Uterus (tissue), 4 donors: ENCODE measurements at regions of chr1 and their contacts with region 1.

Region 1: DNA sequence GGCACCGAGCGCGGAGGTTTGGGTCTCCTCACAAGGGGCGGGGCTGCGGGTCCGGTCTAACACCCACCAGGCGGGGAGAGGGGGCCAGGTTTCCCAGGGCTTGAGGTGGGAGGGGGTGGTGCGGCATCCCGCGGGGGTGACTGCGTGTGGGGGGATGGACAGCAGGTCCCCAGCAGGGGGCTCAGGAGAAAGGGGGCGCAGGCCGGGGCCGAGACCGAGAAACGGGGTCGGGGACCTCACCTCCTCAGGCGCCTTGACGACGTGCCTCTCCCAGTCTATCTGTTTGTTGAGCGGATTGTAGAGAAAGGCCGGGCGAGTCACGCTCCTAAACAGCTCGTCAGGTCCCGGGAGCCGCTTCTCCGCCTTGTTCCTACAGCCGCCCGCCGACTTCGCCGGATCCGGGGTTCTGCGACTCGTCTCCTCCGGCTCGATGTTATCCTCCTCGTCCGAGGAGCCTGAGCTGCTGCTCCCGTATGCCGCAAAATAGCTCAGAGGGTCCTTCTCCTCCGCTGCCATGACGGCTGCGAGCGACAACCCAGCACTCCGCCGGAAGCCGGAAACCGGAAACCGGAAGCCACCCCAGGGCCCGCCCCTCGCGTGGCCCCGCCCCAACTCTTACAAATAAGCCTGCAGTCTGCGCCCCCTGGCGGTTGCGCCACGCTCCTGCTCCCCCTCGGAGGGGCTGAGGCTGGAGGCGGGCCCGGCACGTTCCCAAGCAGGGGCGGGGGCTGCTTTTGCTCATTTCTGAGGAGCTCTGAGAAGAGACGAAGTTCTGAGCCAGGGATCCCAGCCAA is at the start of gene C1orf52:
- DNase-seq: peak; percentile 95 to 97
- H3K4me3 ChIP-seq: peak within 1 kb of the TSS; percentile 91 to 100
- H3K27ac ChIP-seq: peak within 1 kb of the TSS; percentile 68 to 83
- H3K4me1 ChIP-seq: no peaks in the 10 kb centered on the region
- H3K27me3 ChIP-seq: no peaks in the 10 kb centered on the region
- CTCF ChIP-seq: peak; percentile 96 to 99 (median 97)
- POLR2A ChIP-seq: peak; percentile 26 to 66
- total RNA-seq, gene C1orf52: 22.3 to 47.6 (median 28.8) TPM

Region 2: DNA sequence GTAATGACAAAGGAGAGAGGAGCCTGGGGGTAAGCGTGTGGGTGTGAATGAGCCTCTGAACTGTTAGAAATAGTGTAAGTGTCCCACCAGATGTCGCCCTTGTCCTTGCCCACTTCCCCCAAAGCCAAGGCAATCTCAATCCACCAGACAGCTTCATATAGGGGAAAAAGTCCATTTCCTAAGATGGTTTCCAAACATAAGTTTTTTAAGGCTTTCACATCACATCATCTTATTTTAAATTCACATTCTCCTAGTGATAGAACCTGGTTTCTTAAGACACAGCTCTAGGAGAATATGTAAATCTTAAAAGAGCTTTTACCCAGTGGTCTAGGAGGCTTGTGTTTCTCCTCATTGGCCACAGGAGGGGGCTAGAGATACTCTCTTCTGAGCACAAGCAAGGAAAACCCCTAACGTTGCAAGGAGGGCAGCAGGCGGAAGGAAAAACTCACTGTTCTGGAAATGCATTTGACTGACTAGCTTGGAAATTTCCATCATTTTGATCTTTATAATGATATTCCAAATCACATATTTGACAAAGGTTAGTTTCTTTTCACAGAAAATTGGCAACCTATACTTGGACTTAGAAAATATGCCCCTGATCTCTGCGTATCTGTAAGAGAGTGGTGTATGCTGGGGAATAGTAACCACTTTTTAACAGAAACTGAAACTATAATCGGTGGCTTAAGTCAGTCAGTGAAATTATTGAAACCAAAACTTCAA is 314.4 kb before region 1 on chr1:
- intact Hi-C with region 1: loop called (anchors 5 kb)
- DNase-seq: peak; percentile 54 to 70
- H3K4me3 ChIP-seq: peak overlapping the region; percentile 19 to 40
- H3K27ac ChIP-seq: peak overlapping the region; percentile 69 to 71
- H3K4me1 ChIP-seq: no peaks in the 10 kb centered on the region
- H3K27me3 ChIP-seq: no peaks in the 10 kb centered on the region
- CTCF ChIP-seq: peak; percentile 71 to 92 (median 80)
- POLR2A ChIP-seq: no peak

Region 3: DNA sequence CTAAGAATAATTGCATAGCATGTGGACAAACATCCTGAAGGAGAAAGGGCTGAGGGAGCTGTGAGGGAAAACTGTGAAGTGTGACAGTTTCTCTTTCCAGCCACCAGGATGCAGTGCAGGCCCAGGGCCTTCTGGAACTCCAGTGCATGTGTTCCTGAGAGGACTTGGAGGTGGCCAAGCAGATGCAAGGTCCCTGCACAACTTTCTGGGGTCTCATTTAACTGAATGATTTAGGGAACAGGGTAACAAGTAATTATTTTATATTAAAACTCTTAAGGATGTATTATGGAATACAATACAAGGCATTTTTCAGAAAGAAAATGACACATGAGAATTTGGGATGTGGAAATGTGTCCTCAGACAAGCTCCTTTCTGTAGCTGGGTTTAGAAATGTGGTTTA is 149.8 kb before region 1 on chr1:
- intact Hi-C with region 1: loop called (anchors 5 kb)
- DNase-seq: peak; percentile 43 to 45
- H3K4me3 ChIP-seq: no peak overlapping the region
- H3K27ac ChIP-seq: no peak overlapping the region
- H3K4me1 ChIP-seq: no peaks in the 10 kb centered on the region
- H3K27me3 ChIP-seq: no peaks in the 10 kb centered on the region
- CTCF ChIP-seq: peak; percentile 65 to 78 (median 72)
- POLR2A ChIP-seq: no peak

Region 4: DNA sequence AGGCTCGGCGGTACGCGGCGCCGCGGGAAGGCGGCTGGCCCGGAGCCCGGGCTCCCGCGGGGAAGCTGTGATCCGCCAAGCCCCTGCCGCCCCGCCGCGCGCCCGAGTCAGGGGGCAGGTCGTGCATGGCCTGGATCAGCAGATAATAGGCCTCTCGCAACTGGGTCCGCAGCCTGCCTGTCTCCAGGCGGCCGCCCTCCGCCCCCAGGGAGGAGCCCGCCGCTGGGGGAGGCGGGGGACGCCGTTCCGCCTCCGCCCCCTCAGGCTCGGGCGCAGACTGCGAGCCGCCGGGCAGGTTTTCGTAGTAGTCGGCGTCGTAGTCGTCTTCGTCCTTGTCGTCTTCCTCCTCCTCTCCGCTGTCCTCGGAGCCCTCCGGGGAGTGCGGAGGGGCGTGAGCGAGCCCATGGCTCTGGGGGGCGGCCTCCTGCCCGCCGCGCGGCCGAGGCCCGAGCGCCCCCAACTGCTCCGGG is 58.4 kb before region 1 on chr1 and contains the start of gene SYDE2:
- intact Hi-C with region 1: loop called (anchors 5 kb)
- DNase-seq: peak; percentile 77 to 81
- H3K4me3 ChIP-seq: peak within 1 kb of the TSS; percentile 54 to 92
- H3K27ac ChIP-seq: peak within 1 kb of the TSS; percentile 92 to 99
- H3K4me1 ChIP-seq: peaks cover 0 to 8% of the 10 kb centered on the region in 2 donors
- H3K27me3 ChIP-seq: no peaks in the 10 kb centered on the region
- CTCF ChIP-seq: no peak
- POLR2A ChIP-seq: peak; percentile 44 to 75
- total RNA-seq, gene SYDE2: 5.3 to 24.3 (median 14.6) TPM

Region 5: GRCh38 chr1:85220756-85221201 is 38.5 kb before region 1 on chr1:
- intact Hi-C with region 1: no loop called
- DNase-seq: no peak
- H3K4me3 ChIP-seq: no peak overlapping the region
- H3K27ac ChIP-seq: no peak overlapping the region
- H3K4me1 ChIP-seq: peaks cover 5 to 11% of the 10 kb centered on the region in 2 donors
- H3K27me3 ChIP-seq: no peaks in the 10 kb centered on the region
- CTCF ChIP-seq: no peak
- POLR2A ChIP-seq: no peak